ENCODE measurements at regions of chr19 and their contacts with region 1.

Region 1: DNA sequence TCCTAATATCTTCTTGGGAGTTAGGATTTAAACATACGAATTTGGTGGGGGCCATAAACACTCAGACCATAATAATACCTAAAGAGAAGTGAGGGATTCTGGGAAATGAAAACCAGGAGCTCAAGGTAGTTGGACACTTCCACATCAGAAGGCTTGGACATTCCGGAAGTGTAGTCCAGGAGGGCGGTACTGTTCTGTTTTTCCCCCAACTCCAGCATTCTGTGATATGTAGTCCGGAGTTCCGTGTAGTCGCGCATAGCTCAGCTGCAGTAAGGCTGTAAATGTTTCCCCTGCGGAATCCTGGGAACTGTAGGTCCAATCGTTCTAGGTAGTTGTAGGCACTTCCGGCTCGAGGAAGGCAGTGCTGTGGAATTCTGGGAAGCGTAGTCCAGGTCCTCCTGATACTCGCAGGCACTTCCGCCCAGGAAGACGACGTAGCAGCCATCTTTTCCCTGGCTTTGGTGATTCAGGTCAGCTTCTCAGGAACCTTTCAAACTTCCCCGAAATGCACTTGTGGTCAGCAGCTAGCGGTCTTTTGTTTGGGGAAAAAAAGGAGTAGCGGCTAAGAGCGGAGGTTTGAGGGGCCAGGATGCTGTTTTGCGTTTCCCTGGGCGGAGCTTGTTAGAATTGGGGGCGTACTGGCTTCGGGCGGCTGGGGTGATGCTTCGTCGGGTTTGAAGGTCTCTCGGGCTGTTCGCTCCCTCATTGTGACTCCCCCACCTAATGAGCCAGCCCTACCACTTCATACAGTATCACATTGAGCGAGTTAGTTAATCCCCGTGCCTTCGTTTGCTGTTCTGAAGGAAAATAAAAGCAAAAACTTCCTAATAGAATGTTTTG is at the start of gene ZNF226:
- DNase-seq: peak; percentile 89

Region 2: GRCh38 chr19:44113138-44113783 is 51.6 kb before region 1 on chr19 and contains the start of gene ZNF225:
- CTCF ChIA-PET with region 1: no interaction called
- POLR2A ChIA-PET with region 1: interaction called, 10 read pairs
- DNase-seq: peak; percentile 89

Region 3: GRCh38 chr19:44141191-44142058 is 23.5 kb before region 1 on chr19 and contains the start of gene ZNF234:
- CTCF ChIA-PET with region 1: no interaction called
- POLR2A ChIA-PET with region 1: no interaction called
- DNase-seq: peak; percentile 82

Region 4: GRCh38 chr19:44207126-44207803 is 42.4 kb after region 1 on chr19:
- CTCF ChIA-PET with region 1: no interaction called
- POLR2A ChIA-PET with region 1: interaction called, 10 read pairs
- DNase-seq: peak; percentile 84

Region 5: GRCh38 chr19:44212250-44212865 is 47.5 kb after region 1 on chr19 and contains the start of gene ZNF227:
- CTCF ChIA-PET with region 1: no interaction called
- POLR2A ChIA-PET with region 1: interaction called, 10 read pairs
- DNase-seq: peak; percentile 79